ENCODE measurements at regions of chr7 and their contacts with region 1.

Region 1: GRCh38 chr7:155804897-155805825 is 7.1 kb downstream of the SHH start:
- DNase-seq: peak in 8 of 9 donors; percentile 22 to 78 (median 32)
- ATAC-seq: peak; percentile 63
- H3K4me3 ChIP-seq: peak overlapping the region; percentile 47
- H3K4me3 Mint-ChIP-seq: peak overlapping the region; percentile 66 to 85 (median 76)
- H3K27ac ChIP-seq: no peak overlapping the region
- H3K27ac Mint-ChIP-seq: no peak overlapping the region
- H3K4me1 ChIP-seq: no peaks in the 10 kb centered on the region
- H3K4me1 Mint-ChIP-seq: peaks cover 3 to 35% (median 17%) of the 10 kb centered on the region in 7 donors
- H3K27me3 ChIP-seq: peaks cover 0 to 4% of the 10 kb centered on the region in 2 donors
- H3K27me3 Mint-ChIP-seq: peaks cover 39 to 65% (median 49%) of the 10 kb centered on the region in 5 donors

Region 2: DNA sequence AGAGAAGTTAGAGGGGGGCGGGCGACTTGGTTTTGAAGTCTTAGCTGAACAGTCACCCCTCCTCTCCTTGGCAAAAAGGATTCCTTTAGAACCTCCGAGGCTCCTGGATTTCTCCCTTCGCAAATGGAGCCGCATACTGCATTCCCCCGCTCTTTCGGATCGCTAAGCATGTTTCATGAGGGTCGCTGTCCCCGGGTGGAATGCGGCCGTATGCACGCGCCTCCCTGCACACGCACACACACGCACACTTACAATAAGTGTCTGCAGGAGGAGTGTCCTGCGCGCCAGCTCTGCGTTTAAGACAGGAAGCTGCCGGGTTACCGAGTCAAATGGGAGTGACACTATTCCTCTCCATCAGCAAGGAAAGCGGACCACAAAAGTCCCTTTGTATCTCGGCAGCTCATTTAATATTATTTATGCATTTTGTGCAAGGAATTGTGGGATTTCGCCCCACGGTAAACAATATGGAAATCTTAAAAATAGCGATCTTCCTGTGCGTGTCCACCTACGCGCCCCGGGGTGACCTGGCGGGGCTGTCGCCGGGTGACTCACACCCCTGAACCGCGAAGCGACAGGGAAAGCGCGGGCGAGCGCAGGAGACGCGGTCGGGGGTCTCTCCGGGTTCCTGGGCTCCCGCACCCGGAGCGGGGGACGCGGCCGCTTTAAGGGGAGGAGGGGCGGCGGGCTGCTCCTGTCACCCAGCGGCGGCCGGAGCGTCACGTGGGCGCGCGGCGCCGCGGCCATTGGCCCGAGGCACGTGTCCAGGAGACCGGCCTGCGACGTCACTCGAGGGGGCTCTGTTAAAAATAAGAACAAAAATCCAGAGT is 348.2 kb before region 1 on chr7:
- CTCF ChIA-PET with region 1: no interaction called
- POLR2A ChIA-PET with region 1: no interaction called
- intact Hi-C with region 1: loop called in 1 of 2 experiments (anchors 5 kb)
- DNase-seq: no peak
- ATAC-seq: no peak
- H3K4me3 ChIP-seq: peak overlapping the region; percentile 24
- H3K4me3 Mint-ChIP-seq: peak overlapping the region; percentile 50 to 87 (median 74)
- H3K27ac ChIP-seq: no peak overlapping the region
- H3K27ac Mint-ChIP-seq: peak overlapping the region in 1 of 9 donors; percentile 83
- H3K4me1 ChIP-seq: no peaks in the 10 kb centered on the region
- H3K4me1 Mint-ChIP-seq: peaks cover 7 to 34% (median 20%) of the 10 kb centered on the region in 7 donors
- H3K27me3 ChIP-seq: peaks cover 0 to 9% of the 10 kb centered on the region in 2 donors
- H3K27me3 Mint-ChIP-seq: peaks cover 50 to 80% (median 68%) of the 10 kb centered on the region in 5 donors

Region 3: DNA sequence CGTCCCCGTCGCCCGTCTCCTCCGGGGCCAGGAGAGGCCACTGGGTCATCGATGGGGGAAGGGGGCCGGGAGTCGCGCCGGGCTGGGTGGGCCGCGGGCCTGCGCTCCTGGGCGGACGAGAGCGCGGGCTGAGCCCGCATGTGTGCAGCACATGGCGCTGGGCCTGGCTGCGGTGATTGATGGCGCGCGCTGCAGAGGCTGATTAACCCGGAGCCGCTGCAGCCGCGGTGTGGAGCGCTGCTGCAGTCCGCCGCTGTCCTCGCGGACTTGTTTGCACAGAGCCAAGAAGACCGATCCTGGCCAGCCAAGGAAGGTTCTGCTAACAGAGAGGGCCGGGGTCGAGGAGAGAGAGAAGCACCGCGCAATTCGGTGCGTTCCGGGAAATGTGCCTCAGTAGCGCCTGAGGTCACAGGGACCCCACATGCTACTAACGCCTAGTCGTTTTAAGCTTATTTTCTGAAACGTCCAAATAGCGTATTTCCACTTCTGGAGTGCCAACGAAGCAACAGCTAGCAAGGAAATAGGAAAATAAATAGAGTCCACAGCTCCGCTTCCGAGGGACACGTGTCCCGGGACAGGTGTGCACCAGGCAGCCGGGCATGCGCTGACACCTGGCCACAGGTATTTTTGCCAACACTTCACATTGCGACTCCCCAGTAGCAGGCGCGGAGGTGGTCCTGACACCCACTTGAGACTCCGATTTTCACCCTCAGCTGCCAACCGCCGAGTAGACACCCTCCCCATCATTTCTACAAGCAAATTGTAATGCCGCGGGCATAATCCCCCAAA is 1199.1 kb after region 1 on chr7:
- CTCF ChIA-PET with region 1: no interaction called
- POLR2A ChIA-PET with region 1: no interaction called
- intact Hi-C with region 1: loop called in 1 of 2 experiments (anchors 5 kb)
- DNase-seq: peak in 1 of 9 donors; percentile 20
- ATAC-seq: no peak
- H3K4me3 ChIP-seq: no peak overlapping the region
- H3K4me3 Mint-ChIP-seq: peak overlapping the region in 8 of 10 donors; percentile 8 to 56 (median 25)
- H3K27ac ChIP-seq: no peak overlapping the region
- H3K27ac Mint-ChIP-seq: peak overlapping the region in 1 of 9 donors; percentile 63
- H3K4me1 ChIP-seq: peaks cover 0 to 14% of the 10 kb centered on the region in 2 donors
- H3K4me1 Mint-ChIP-seq: peaks cover 13 to 32% (median 27%) of the 10 kb centered on the region in 7 donors
- H3K27me3 ChIP-seq: peaks cover 11 to 19% of the 10 kb centered on the region in 2 donors
- H3K27me3 Mint-ChIP-seq: peaks cover 52 to 79% (median 61%) of the 10 kb centered on the region in 5 donors

Region 4: GRCh38 chr7:157016352-157017041 is 1211.3 kb after region 1 on chr7:
- CTCF ChIA-PET with region 1: no interaction called
- POLR2A ChIA-PET with region 1: no interaction called
- intact Hi-C with region 1: loop called in 1 of 2 experiments (anchors 5 kb)
- DNase-seq: peak in 1 of 9 donors; percentile 51
- ATAC-seq: peak; percentile 24
- H3K4me3 ChIP-seq: no peak overlapping the region
- H3K4me3 Mint-ChIP-seq: peak overlapping the region in 1 of 10 donors; percentile 18
- H3K27ac ChIP-seq: no peak overlapping the region
- H3K27ac Mint-ChIP-seq: no peak overlapping the region
- H3K4me1 ChIP-seq: peaks cover 0 to 6% of the 10 kb centered on the region in 2 donors
- H3K4me1 Mint-ChIP-seq: peaks cover 11 to 33% (median 22%) of the 10 kb centered on the region in 7 donors
- H3K27me3 ChIP-seq: peaks cover 18% of the 10 kb centered on the region in 2 donors
- H3K27me3 Mint-ChIP-seq: peaks cover 68 to 84% (median 77%) of the 10 kb centered on the region in 5 donors

Region 5: DNA sequence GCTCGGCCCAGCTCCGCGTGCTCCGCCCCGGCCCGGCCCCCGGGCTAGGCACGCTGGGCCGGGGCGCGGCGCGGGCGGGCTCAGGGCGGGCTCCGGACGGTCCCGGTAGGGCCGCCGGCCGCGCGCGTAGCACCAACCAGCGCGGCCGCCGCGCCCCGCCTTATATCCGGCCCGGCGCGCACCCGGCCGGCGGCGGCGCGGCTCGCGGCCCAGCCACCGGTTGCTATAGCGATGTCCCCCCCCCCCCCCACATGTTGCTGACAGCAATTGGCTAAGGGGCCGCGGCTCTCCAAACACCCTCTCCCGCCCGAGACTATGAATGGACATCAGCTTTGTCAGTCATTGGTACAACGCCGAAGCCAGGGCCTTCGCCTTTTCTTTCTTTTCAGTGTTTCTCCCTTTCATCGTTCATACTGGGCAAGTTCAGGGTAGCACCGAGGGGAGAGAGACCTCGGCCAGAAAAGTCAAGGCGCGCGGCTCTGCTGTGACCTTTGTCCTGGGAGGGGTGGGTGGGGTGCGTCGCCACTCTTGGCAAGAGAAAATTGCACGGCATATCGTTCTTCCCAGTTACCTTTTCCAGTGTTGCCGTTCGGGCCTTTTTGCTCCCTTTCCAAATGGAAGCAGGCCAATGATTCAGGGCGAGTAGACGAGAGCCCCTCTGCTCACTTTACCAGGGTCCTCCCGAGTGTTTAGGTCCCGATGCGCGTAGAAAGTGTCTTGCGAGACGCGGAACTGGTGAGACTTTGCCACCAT is 1885.8 kb after region 1 on chr7:
- CTCF ChIA-PET with region 1: no interaction called
- POLR2A ChIA-PET with region 1: no interaction called
- intact Hi-C with region 1: loop called in 1 of 2 experiments (anchors 5 kb)
- DNase-seq: peak in 1 of 9 donors; percentile 6
- ATAC-seq: peak; percentile 40
- H3K4me3 ChIP-seq: no peak overlapping the region
- H3K4me3 Mint-ChIP-seq: peak overlapping the region; percentile 58 to 84 (median 79)
- H3K27ac ChIP-seq: no peak overlapping the region
- H3K27ac Mint-ChIP-seq: peak overlapping the region in 2 of 9 donors; percentile 14 to 33
- H3K4me1 ChIP-seq: peaks cover 0 to 26% of the 10 kb centered on the region in 2 donors
- H3K4me1 Mint-ChIP-seq: peaks cover 2 to 47% (median 38%) of the 10 kb centered on the region in 7 donors
- H3K27me3 ChIP-seq: peaks cover 12 to 31% of the 10 kb centered on the region in 2 donors
- H3K27me3 Mint-ChIP-seq: peaks cover 36 to 68% (median 54%) of the 10 kb centered on the region in 5 donors

Measured in naive thymus-derived CD4-positive, alpha-beta T cell (primary cell).